ENCODE measurements at regions of chr1 and their contacts with region 1.

Region 1: DNA sequence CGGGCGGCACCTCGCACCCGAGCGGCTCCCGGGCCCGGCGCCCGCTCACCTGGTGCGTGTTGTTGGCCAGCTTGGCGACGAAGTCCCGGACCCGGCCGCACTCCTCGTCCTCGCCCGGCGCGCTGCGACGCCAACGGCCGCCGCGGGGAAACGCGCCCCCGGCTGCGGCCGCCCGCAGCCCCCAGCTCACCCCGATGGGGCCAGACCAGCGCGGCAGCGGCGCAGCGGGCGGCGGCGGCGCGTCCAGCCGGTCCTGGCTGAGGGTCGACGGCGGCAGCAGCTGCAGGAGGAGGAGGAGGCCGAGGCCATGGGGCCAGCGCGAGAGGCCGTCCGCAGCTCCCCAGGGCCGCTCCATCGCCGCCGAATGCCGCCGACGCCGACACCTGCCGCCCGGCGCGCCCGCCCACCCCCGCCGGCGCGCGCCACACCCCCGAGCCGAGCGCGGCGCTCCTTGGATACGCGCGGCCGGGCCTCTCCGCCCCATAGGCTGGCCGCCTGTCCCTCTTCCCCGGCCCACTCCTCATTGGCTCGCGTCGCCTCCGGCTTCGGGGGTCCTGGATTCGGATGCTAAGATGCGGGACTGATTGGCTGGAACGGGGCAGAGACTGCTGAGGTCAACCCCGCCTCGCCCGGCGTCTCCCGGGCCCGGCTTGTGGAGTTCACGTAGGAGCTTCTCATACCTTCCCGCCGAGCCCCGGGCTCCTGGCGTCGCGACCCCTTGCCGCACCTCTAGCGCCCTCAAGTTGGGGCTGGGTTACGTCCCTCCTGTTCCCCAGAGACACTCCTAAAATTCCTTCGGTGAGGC is at the start of gene SORT1:
- DNase-seq: peak; percentile 48 to 76 (median 65)
- H3K4me3 ChIP-seq: peak within 1 kb of the TSS; percentile 55
- H3K27ac ChIP-seq: no peak within 1 kb of the TSS
- H3K4me1 ChIP-seq: peaks cover 4% of the 10 kb centered on the region
- H3K27me3 ChIP-seq: no peaks in the 10 kb centered on the region
- CTCF ChIP-seq: no peak
- EP300 ChIP-seq: no peak
- POLR2A ChIP-seq: no peak
- total RNA-seq, gene SORT1: 4.3 to 37.0 (median 16.0) TPM

Region 2: DNA sequence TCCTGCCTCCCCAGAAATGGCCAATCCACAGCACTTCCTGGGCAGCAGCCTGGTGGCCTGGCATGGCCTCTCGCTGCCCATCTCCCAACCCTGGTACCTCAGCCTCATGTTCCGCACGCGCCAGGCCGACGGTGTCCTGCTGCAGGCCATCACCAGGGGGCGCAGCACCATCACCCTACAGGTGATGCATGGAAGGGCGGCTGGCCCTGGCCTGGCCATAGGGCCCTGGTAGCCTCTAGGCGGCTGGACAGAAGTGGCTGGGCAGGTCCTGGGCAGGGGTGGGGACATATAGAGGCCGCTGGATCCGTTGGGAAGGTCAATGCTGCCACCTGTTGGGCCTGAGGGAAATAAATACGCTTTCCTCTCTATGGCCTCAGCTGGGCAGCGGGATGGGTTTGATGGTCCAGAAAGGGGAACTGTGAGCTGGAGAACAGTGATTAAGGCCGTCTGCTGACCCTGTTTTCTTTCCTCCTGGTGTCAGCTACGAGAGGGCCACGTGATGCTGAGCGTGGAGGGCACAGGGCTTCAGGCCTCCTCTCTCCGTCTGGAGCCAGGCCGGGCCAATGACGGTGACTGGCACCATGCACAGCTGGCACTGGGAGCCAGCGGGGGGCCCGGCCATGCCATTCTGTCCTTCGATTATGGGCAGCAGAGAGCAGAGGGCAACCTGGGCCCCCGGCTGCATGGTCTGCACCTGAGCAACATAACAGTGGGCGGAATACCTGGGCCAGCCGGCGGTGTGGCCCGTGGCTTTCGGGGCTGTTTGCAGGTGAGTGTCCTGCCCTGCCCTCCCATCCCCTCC is 133.9 kb before region 1 on chr1:
- intact Hi-C with region 1: loop called in 2 of 4 experiments (anchors 5 kb)
- DNase-seq: peak; percentile 62 to 86 (median 79)
- H3K4me3 ChIP-seq: no peak overlapping the region
- H3K27ac ChIP-seq: no peak overlapping the region
- H3K4me1 ChIP-seq: no peaks in the 10 kb centered on the region
- H3K27me3 ChIP-seq: no peaks in the 10 kb centered on the region
- CTCF ChIP-seq: peak; percentile 76 to 98 (median 94)
- EP300 ChIP-seq: no peak
- POLR2A ChIP-seq: no peak

Region 3: GRCh38 chr1:109277434-109278204 is 120.1 kb before region 1 on chr1:
- intact Hi-C with region 1: loop called in 3 of 4 experiments (anchors 2 to 5 kb)
- DNase-seq: peak; percentile 33 to 78 (median 67)
- H3K4me3 ChIP-seq: no peak overlapping the region
- H3K27ac ChIP-seq: no peak overlapping the region
- H3K4me1 ChIP-seq: peaks cover 2% of the 10 kb centered on the region
- H3K27me3 ChIP-seq: no peaks in the 10 kb centered on the region
- CTCF ChIP-seq: peak; percentile 31 to 73 (median 65)
- EP300 ChIP-seq: no peak
- POLR2A ChIP-seq: no peak

Measured in ovary (tissue), 10 donors.